ENCODE measurements at regions of chr22 and their contacts with region 1.

Region 1: GRCh38 chr22:22666307-22667091 is 22.1 kb downstream of the GGTLC2 start:
- DNase-seq: peak; percentile 71
- ATAC-seq: peak; percentile 95
- H3K4me3 Mint-ChIP-seq: no peak overlapping the region
- H3K27ac Mint-ChIP-seq: no peak overlapping the region
- H3K4me1 Mint-ChIP-seq: no peaks in the 10 kb centered on the region
- H3K27me3 Mint-ChIP-seq: peaks cover 96% of the 10 kb centered on the region
- CTCF ChIP-seq: peak; percentile 23; the same call in 1 of the 2 replicates

Region 2: DNA sequence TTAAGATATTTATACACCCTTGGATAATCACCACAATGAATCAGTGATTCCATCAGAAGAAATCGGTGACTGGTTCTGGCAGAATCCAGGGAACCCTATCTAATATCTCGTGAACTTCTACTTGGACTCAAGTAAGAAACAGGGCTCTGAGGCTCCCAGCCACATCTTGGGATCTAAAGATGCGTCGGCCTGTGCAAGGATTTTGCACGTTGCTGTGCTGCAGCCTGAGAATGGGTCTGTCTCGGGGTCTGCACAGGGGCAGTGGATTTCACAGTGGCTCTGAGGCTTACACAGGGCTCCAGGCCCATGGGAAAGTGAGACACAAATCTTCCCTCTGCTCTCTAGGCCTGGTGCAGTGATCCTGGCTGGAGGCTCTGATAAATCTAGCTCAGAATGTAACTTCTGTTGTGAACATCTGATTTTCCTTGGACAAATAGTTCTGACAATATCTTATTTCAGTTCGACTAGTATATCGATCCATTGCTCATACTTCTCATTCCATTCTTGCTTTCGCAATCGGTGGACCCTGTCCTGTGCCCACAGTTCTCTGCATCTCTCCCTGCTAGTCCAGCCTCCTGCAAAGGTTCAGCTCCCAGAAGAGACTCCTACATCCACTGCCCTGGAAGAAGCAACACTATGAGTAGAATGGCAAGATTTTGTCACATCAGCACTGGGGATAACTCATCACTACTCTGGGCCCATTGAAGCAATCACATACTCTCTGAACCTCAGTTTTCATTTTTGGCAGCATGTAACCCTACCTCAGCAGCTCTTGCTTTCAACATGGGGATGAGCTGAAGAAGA is 578.4 kb before region 1 on chr22:
- CTCF ChIA-PET with region 1: no interaction called
- POLR2A ChIA-PET with region 1: no interaction called
- DNase-seq: no peak
- ATAC-seq: no peak
- H3K4me3 Mint-ChIP-seq: no peak overlapping the region
- H3K27ac Mint-ChIP-seq: no peak overlapping the region
- H3K4me1 Mint-ChIP-seq: no peaks in the 10 kb centered on the region
- H3K27me3 Mint-ChIP-seq: peaks cover 100% of the 10 kb centered on the region
- CTCF ChIP-seq: no peak

Region 3: DNA sequence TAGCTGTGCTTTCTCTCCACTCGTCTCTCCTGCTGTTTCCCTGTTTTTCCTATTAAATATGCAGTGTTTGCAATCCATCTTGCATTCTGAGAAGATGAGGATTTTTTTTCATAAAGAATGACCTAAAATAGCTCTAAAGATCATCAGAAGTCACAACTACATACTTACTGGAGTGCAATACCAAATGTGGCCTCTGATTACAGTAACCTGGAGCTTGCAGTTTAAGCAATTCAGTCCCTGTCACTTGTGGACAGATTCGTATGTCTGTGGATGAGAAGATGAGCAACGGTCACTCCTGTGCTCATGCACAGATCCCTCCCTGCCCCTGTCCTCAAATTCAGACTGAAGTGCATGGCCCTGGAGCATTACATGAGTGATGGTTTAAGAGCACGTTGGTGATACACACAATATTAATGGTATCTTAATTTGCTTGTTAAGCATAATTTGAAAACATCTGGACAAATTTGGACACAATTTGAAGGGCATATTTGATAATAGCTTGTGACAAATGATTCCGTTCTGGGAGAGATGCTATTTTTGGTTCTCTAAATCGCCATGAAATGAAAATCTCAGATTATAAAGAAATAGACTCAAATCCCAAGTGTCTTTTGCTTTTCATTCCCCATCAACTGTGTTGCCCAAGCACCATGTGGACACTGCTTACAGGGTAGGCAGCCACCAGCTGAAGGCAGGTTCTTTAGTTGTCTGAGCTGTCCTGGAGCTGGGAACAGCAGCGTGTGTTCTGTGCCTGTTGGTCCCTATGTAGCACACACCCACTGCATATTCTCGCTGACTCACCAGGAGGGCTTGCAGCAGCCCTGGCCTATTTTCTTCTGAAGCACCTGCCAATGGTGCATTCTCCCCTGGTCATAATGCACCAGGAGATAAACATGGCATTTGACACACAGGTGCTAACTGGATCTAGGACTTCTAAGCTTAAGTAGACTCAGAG is 74.9 kb before region 1 on chr22:
- CTCF ChIA-PET with region 1: interaction called, 33 read pairs
- POLR2A ChIA-PET with region 1: no interaction called
- DNase-seq: no peak
- ATAC-seq: no peak
- H3K4me3 Mint-ChIP-seq: no peak overlapping the region
- H3K27ac Mint-ChIP-seq: no peak overlapping the region
- H3K4me1 Mint-ChIP-seq: no peaks in the 10 kb centered on the region; the same call in 1 of the 2 replicates
- H3K27me3 Mint-ChIP-seq: peaks cover 93% of the 10 kb centered on the region
- CTCF ChIP-seq: no peak

Region 4: GRCh38 chr22:22605074-22605404 is 61.5 kb before region 1 on chr22:
- CTCF ChIA-PET with region 1: no interaction called
- POLR2A ChIA-PET with region 1: no interaction called
- DNase-seq: no peak
- ATAC-seq: no peak
- H3K4me3 Mint-ChIP-seq: no peak overlapping the region
- H3K27ac Mint-ChIP-seq: no peak overlapping the region
- H3K4me1 Mint-ChIP-seq: peaks cover 14% of the 10 kb centered on the region
- H3K27me3 Mint-ChIP-seq: peaks cover 94% of the 10 kb centered on the region
- CTCF ChIP-seq: no peak

Region 5: GRCh38 chr22:22681221-22681739 is 14.8 kb after region 1 on chr22:
- CTCF ChIA-PET with region 1: interaction called, 61 read pairs
- POLR2A ChIA-PET with region 1: no interaction called
- DNase-seq: no peak
- ATAC-seq: no peak
- H3K4me3 Mint-ChIP-seq: no peak overlapping the region
- H3K27ac Mint-ChIP-seq: no peak overlapping the region
- H3K4me1 Mint-ChIP-seq: no peaks in the 10 kb centered on the region
- H3K27me3 Mint-ChIP-seq: peaks cover 97% of the 10 kb centered on the region
- CTCF ChIP-seq: no peak

Region 6: GRCh38 chr22:22692707-22693530 is 26.4 kb after region 1 on chr22:
- CTCF ChIA-PET with region 1: interaction called, 19 read pairs
- POLR2A ChIA-PET with region 1: no interaction called
- DNase-seq: peak; percentile 80
- ATAC-seq: peak; percentile 88
- H3K4me3 Mint-ChIP-seq: no peak overlapping the region
- H3K27ac Mint-ChIP-seq: no peak overlapping the region
- H3K4me1 Mint-ChIP-seq: peaks cover 4% of the 10 kb centered on the region; the same call in 1 of the 2 replicates
- H3K27me3 Mint-ChIP-seq: peaks cover 98% of the 10 kb centered on the region
- CTCF ChIP-seq: no peak; the same call in 1 of the 2 replicates

Region 7: GRCh38 chr22:22710719-22711531 is 44.4 kb after region 1 on chr22:
- CTCF ChIA-PET with region 1: interaction called, 52 read pairs
- POLR2A ChIA-PET with region 1: no interaction called
- DNase-seq: peak; percentile 83
- ATAC-seq: peak; percentile 77
- H3K4me3 Mint-ChIP-seq: no peak overlapping the region
- H3K27ac Mint-ChIP-seq: no peak overlapping the region
- H3K4me1 Mint-ChIP-seq: no peaks in the 10 kb centered on the region
- H3K27me3 Mint-ChIP-seq: peaks cover 99% of the 10 kb centered on the region
- CTCF ChIP-seq: peak; percentile 96

Region 8: DNA sequence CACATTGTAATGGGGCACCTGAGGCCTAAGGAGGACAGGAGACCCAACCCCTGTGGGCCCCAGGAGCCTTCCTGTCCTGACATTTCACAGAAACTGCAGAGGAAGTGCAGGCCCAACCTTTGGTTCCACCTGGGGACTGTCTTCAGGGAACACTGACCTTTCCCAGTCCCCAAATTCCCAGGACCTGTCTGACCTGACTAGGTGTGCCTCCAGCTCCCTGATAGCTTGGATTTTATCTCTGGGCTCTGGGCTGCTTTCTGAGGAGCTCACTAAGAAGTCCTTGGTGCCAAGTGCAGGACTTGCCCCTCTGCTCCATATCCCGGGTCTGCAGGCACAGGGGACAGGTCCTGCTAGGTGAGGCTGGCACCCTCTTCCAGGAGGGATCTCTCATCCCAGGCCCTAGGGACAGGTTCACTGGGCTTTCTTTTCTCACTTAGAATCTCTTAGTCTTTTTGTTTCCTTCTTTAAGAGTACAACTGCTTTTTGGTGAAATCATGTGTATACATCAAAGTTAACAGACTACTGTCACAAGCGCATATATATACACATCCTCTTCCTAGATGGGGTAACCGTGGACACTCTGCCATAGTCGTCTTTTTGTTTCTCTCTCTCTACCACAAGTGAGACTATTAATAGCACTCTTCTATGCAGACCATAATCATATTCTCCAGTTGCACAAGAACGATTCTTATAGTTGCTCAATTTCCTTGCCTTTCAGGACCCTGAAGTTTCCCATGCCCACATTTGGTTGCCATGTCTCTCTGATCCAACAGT is 149.1 kb after region 1 on chr22:
- CTCF ChIA-PET with region 1: no interaction called
- POLR2A ChIA-PET with region 1: no interaction called
- DNase-seq: no peak
- ATAC-seq: no peak
- H3K4me3 Mint-ChIP-seq: no peak overlapping the region
- H3K27ac Mint-ChIP-seq: no peak overlapping the region
- H3K4me1 Mint-ChIP-seq: no peaks in the 10 kb centered on the region
- H3K27me3 Mint-ChIP-seq: peaks cover 91% of the 10 kb centered on the region
- CTCF ChIP-seq: no peak

Measured in WTC11 (cell line).